Activated CD8-positive, alpha-beta T cell treated with anti-CD3 and anti-CD28 coated beads for 36 hours (primary cell): ENCODE measurements at regions of chr20 and their contacts with region 1.

Region 1: DNA sequence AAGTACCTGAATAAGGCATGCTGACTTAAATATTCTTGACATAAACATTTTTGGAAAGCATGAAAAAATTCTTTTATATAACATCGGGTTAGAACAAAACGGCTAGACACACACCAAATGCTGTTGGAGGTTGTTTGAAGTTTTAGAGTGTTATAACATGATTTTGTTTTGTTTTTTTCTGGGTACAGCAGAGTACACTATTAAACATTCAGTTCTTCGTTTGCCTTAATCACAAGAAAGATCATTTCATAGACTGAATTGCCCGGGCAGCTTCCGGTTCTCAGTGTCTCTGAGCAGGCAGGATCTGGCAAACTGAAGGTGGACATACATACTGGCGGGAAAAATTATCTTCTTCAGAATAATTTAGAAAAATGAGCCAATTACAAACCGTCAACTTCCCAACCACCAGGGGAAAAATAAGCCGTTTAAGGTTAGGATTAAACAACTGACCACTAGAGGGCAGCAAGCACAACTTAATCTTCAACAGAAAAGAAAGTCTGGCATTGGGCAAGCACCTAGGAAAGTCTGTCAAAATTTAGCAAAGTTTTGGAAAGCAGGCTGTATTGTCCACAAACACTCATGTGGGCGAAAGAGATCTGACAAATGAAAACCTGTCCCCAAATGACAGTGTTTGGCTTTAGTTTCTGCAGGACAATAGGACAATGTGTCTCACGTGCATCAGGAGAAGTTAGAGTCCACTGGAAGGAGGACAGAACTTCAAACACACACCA is 15.0 kb downstream of the ZNF217 start:
- DNase-seq: peak; percentile 69
- ATAC-seq: peak; percentile 41
- H3K4me3 Mint-ChIP-seq: peak overlapping the region; percentile 90
- H3K27ac Mint-ChIP-seq: peak overlapping the region; percentile 94
- H3K4me1 Mint-ChIP-seq: peaks cover 77% of the 10 kb centered on the region
- H3K27me3 Mint-ChIP-seq: no peaks in the 10 kb centered on the region
- CTCF ChIP-seq: peak; percentile 88

Region 2: GRCh38 chr20:53594068-53595017 is 15.7 kb after region 1 on chr20:
- CTCF ChIA-PET with region 1: interaction called, 4 read pairs
- POLR2A ChIA-PET with region 1: interaction called, 14 read pairs
- intact Hi-C with region 1: no loop called
- DNase-seq: peak; percentile 97
- ATAC-seq: peak; percentile 73
- H3K4me3 Mint-ChIP-seq: peak overlapping the region; percentile 84
- H3K27ac Mint-ChIP-seq: peak overlapping the region; percentile 94
- H3K4me1 Mint-ChIP-seq: peaks cover 44% of the 10 kb centered on the region
- H3K27me3 Mint-ChIP-seq: no peaks in the 10 kb centered on the region
- CTCF ChIP-seq: no peak

Region 3: GRCh38 chr20:53652090-53652858 is 73.6 kb after region 1 on chr20:
- CTCF ChIA-PET with region 1: no interaction called
- POLR2A ChIA-PET with region 1: interaction called, 4 read pairs
- intact Hi-C with region 1: loop called (anchors 5 kb)
- DNase-seq: peak; percentile 13
- ATAC-seq: peak; percentile 71
- H3K4me3 Mint-ChIP-seq: peak overlapping the region; percentile 72
- H3K27ac Mint-ChIP-seq: peak overlapping the region; percentile 97
- H3K4me1 Mint-ChIP-seq: peaks cover 43% of the 10 kb centered on the region
- H3K27me3 Mint-ChIP-seq: no peaks in the 10 kb centered on the region
- CTCF ChIP-seq: no peak

Region 4: GRCh38 chr20:53708129-53708968 is 129.7 kb after region 1 on chr20:
- CTCF ChIA-PET with region 1: interaction called, 12 read pairs
- POLR2A ChIA-PET with region 1: interaction called, 3 read pairs
- intact Hi-C with region 1: loop called (anchors 5 kb)
- DNase-seq: peak; percentile 75
- ATAC-seq: peak; percentile 79
- H3K4me3 Mint-ChIP-seq: peak overlapping the region; percentile 70
- H3K27ac Mint-ChIP-seq: peak overlapping the region; percentile 96
- H3K4me1 Mint-ChIP-seq: peaks cover 56% of the 10 kb centered on the region
- H3K27me3 Mint-ChIP-seq: no peaks in the 10 kb centered on the region
- CTCF ChIP-seq: no peak

Region 5: GRCh38 chr20:53939572-53940359 is 361.1 kb after region 1 on chr20:
- CTCF ChIA-PET with region 1: interaction called, 65 read pairs
- POLR2A ChIA-PET with region 1: interaction called, 5 read pairs
- intact Hi-C with region 1: no loop called
- DNase-seq: peak; percentile 92
- ATAC-seq: peak; percentile 84
- H3K4me3 Mint-ChIP-seq: no peak overlapping the region
- H3K27ac Mint-ChIP-seq: peak overlapping the region; percentile 22
- H3K4me1 Mint-ChIP-seq: peaks cover 45% of the 10 kb centered on the region
- H3K27me3 Mint-ChIP-seq: no peaks in the 10 kb centered on the region
- CTCF ChIP-seq: peak; percentile 85

Region 6: DNA sequence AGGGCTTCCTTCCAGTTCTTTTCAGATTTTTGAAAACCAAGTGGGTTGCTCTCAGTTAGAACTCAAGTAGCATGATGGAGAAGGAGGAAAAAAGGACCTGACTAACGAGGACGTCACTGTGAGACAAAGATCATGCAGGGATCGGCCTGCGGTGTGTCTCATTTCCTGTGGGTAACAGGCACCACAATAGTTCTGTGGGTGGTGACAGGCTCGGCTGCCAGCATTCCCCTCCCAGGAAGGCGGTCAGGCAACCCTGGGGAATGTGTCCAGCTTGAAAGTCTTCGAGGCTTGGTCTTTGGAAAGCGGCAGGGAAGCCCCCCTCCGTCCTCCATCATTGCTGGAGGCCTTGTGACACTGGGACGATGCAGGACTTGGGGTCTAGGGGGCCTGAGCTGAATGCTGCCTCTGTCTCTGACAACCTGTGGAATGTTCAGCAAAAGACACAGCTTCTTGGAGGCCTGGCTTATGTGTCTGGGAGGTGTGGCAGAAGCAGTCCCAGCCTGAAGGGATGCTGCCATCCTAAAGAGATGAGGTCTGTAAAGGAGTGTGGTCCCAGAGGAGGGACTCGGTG is 370.7 kb after region 1 on chr20:
- CTCF ChIA-PET with region 1: no interaction called
- POLR2A ChIA-PET with region 1: interaction called, 4 read pairs
- intact Hi-C with region 1: loop called (anchors 5 kb)
- DNase-seq: peak; percentile 89
- ATAC-seq: peak; percentile 89
- H3K4me3 Mint-ChIP-seq: peak overlapping the region; percentile 68
- H3K27ac Mint-ChIP-seq: peak overlapping the region; percentile 95
- H3K4me1 Mint-ChIP-seq: peaks cover 29% of the 10 kb centered on the region
- H3K27me3 Mint-ChIP-seq: no peaks in the 10 kb centered on the region
- CTCF ChIP-seq: no peak